ENCODE measurements at regions of chr12 and their contacts with region 1.

Region 1: GRCh38 chr12:75827061-75827460 is 204.5 kb downstream of the PHLDA1 start:
- DNase-seq: no peak
- ATAC-seq: no peak
- H3K4me3 ChIP-seq: no peak overlapping the region
- H3K27ac ChIP-seq: 0 out of 6 replicates have a peak overlapping the region, but pooled peaks of 1 of the 2 experiments have one; percentile 2
- H3K4me1 ChIP-seq: no peaks in the 10 kb centered on the region
- CTCF ChIP-seq: no peak
- EP300 ChIP-seq: no peak
- POLR2A ChIP-seq: no peak
- RAD21 ChIP-seq: no peak

Region 2: GRCh38 chr12:75816897-75817296 is 10.2 kb before region 1 on chr12:
- CTCF ChIA-PET with region 1: interaction called, 10 read pairs
- POLR2A ChIA-PET with region 1: no interaction called
- DNase-seq: peak; percentile 19 to 74
- ATAC-seq: peak; percentile 47 to 58; a peak in 4 of 6 replicates
- H3K4me3 ChIP-seq: no peak overlapping the region
- H3K27ac ChIP-seq: peak overlapping the region in 1 of 2 experiments; percentile 25; a peak in 1 of 6 replicates
- H3K4me1 ChIP-seq: peaks cover 13% of the 10 kb centered on the region; the same call in 2 of the 3 replicates
- CTCF ChIP-seq: peak; percentile 28; the same call in 2 of the 3 replicates
- EP300 ChIP-seq: no peak
- POLR2A ChIP-seq: no peak
- RAD21 ChIP-seq: peak; percentile 58 to 67; a peak in 4 of 5 replicates